ENCODE measurements at regions of chr13 and their contacts with region 1.

Region 1: GRCh38 chr13:78137404-78138142 is 218.9 kb upstream of the EDNRB start:
- DNase-seq: peak in 1 of 2 experiments; percentile 7
- H3K4me3 ChIP-seq: no peak overlapping the region
- H3K27ac ChIP-seq: no peak overlapping the region
- H3K4me1 ChIP-seq: no peaks in the 10 kb centered on the region
- H3K27me3 ChIP-seq: no peaks in the 10 kb centered on the region
- CTCF ChIP-seq: peak; percentile 79

Region 2: GRCh38 chr13:78241278-78241919 is 103.8 kb after region 1 on chr13:
- CTCF ChIA-PET with region 1: no interaction called
- POLR2A ChIA-PET with region 1: no interaction called
- intact Hi-C with region 1: loop called (anchors 5 kb)
- DNase-seq: peak in 1 of 2 experiments; percentile 13
- H3K4me3 ChIP-seq: no peak overlapping the region
- H3K27ac ChIP-seq: no peak overlapping the region
- H3K4me1 ChIP-seq: no peaks in the 10 kb centered on the region
- H3K27me3 ChIP-seq: no peaks in the 10 kb centered on the region
- CTCF ChIP-seq: peak; percentile 69

Region 3: GRCh38 chr13:78689011-78689410 is 551.4 kb after region 1 on chr13:
- CTCF ChIA-PET with region 1: interaction called, 16 read pairs
- POLR2A ChIA-PET with region 1: no interaction called
- intact Hi-C with region 1: no loop called
- DNase-seq: no peak
- H3K4me3 ChIP-seq: no peak overlapping the region
- H3K27ac ChIP-seq: no peak overlapping the region
- H3K4me1 ChIP-seq: no peaks in the 10 kb centered on the region
- H3K27me3 ChIP-seq: no peaks in the 10 kb centered on the region
- CTCF ChIP-seq: no peak

Region 4: GRCh38 chr13:78978381-78978998 is 840.9 kb after region 1 on chr13:
- CTCF ChIA-PET with region 1: interaction called, 17 read pairs
- POLR2A ChIA-PET with region 1: no interaction called
- intact Hi-C with region 1: loop called (anchors 2 kb)
- DNase-seq: peak; percentile 9 to 37
- H3K4me3 ChIP-seq: no peak overlapping the region
- H3K27ac ChIP-seq: no peak overlapping the region
- H3K4me1 ChIP-seq: no peaks in the 10 kb centered on the region
- H3K27me3 ChIP-seq: no peaks in the 10 kb centered on the region
- CTCF ChIP-seq: peak; percentile 83

Region 5: GRCh38 chr13:79320433-79320832 is 1182.9 kb after region 1 on chr13:
- CTCF ChIA-PET with region 1: no interaction called
- POLR2A ChIA-PET with region 1: no interaction called
- intact Hi-C with region 1: loop called (anchors 10 kb)
- DNase-seq: no peak
- H3K4me3 ChIP-seq: no peak overlapping the region
- H3K27ac ChIP-seq: no peak overlapping the region
- H3K4me1 ChIP-seq: no peaks in the 10 kb centered on the region
- H3K27me3 ChIP-seq: no peaks in the 10 kb centered on the region
- CTCF ChIP-seq: no peak